K562 (cell line): ENCODE measurements at regions of chr15 and their contacts with region 1.

Region 1: DNA sequence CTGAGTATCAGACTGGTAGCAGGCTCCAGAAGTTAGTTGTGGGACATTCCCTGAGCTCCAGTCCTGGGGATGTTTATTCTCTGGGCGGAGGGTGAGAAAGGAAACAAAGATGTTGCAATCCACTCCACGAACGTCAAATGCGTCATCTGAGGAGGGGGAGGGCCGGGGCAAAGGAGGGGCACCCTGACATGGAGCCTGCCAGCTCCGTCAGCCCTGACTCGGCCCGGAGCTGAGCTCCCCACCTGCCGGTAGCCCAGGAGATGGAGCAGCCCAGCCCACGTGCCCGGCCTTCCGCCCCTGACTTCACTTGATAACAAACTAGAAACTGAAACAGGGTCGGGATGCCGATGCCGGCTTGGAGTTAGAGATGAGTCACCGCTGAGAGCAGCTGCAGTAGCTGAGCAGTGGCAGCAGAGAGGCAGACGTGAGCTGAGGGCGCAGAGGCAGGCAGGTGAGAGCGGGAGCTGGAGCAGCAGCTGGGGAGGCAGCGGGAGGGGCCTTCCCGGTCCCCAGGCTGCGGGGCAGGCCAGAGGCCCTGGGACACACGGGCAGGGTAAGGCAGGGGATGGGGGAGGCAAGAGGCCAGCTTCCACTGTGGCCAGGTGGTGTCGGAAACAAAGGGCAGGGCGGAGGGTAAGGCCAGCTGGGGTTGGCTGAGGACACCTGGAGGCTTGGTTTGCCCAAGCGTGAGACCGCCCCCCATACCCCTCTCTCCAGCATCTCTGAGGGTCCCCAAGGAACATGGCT is at the start of gene ISG20:
- DNase-seq: peak; percentile 91 to 95 (median 93)
- ATAC-seq: peak; percentile 96
- H3K4me3 ChIP-seq: peak within 1 kb of the TSS; percentile 14
- H3K27ac ChIP-seq: peak within 1 kb of the TSS; percentile 76
- H3K4me1 ChIP-seq: peaks cover 16 to 17% of the 10 kb centered on the region in 2 experiments; a peak in 4 of 5 replicates
- H3K27me3 ChIP-seq: no peaks in the 10 kb centered on the region
- CTCF ChIP-seq: peak; percentile 64 to 76 (median 65)
- EP300 ChIP-seq: peak; percentile 83
- POLR2A ChIP-seq: peak; percentile 55; the same call in 1 of the 2 replicates
- RAD21 ChIP-seq: peak in 1 of 2 experiments; percentile 36; a peak in 2 of 4 replicates
- polyA plus RNA-seq, gene ISG20: 0.70 to 1.00 TPM

Region 2: DNA sequence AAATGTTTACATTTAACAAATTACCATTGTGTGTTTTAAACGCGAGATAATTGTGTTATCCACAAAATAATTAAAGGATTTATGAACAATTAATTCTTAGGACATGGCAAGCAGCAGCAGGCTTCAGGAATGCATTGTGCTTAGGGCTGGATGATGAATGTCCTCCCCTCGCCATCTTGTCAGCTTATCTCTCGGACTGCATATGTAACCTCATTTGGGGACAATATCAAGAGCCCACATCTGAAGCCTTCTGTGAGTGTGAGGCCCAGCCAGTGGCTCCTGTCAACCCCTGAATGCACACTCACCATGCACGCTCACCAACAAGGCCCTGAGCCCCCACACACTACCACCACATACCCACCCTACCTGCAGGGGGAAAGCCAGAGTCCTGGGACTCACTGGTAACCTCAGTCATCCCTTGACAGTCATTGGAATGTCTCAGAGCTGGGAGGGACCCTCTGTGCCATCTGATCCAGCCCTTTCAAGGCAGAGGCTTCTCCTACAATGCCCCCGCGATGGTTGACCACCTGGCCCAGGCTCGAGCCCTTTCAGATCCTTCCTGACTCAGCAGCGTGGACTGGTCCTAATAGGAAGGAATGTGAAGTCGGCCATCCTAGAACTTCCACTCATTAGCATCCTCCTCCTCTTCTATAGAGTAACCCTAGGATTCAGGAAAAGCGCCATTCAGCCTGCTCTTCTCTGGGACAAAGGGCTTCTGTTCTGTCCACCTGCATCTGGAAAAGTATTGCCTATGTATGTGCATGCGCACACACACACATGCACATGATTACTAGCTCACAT is 209.8 kb before region 1 on chr15:
- CTCF ChIA-PET with region 1: no interaction called
- POLR2A ChIA-PET with region 1: no interaction called
- in situ Hi-C with region 1: no loop called
- intact Hi-C with region 1: no loop called
- DNase-seq: peak in 1 of 4 experiments; percentile 10
- ATAC-seq: peak; percentile 61
- H3K4me3 ChIP-seq: no peak overlapping the region
- H3K27ac ChIP-seq: no peak overlapping the region
- H3K4me1 ChIP-seq: 0 out of 5 replicates have a peak, but pooled peaks cover 0 to 4% of the 10 kb centered on the region in 2 experiments
- H3K27me3 ChIP-seq: peaks cover 21 to 33% of the 10 kb centered on the region in 2 experiments
- CTCF ChIP-seq: no peak
- EP300 ChIP-seq: no peak
- POLR2A ChIP-seq: no peak
- RAD21 ChIP-seq: no peak

Region 3: GRCh38 chr15:88628018-88628892 is 10.5 kb before region 1 on chr15:
- CTCF ChIA-PET with region 1: no interaction called
- POLR2A ChIA-PET with region 1: interaction called, 10 read pairs
- in situ Hi-C with region 1: no loop called
- intact Hi-C with region 1: no loop called
- DNase-seq: peak in 1 of 4 experiments; percentile 38
- ATAC-seq: no peak
- H3K4me3 ChIP-seq: no peak overlapping the region
- H3K27ac ChIP-seq: no peak overlapping the region
- H3K4me1 ChIP-seq: peaks cover 2 to 31% of the 10 kb centered on the region in 2 experiments; a peak in 4 of 5 replicates
- H3K27me3 ChIP-seq: no peaks in the 10 kb centered on the region
- CTCF ChIP-seq: no peak
- EP300 ChIP-seq: no peak
- POLR2A ChIP-seq: peak; percentile 17; the same call in 1 of the 2 replicates
- RAD21 ChIP-seq: no peak

Region 4: DNA sequence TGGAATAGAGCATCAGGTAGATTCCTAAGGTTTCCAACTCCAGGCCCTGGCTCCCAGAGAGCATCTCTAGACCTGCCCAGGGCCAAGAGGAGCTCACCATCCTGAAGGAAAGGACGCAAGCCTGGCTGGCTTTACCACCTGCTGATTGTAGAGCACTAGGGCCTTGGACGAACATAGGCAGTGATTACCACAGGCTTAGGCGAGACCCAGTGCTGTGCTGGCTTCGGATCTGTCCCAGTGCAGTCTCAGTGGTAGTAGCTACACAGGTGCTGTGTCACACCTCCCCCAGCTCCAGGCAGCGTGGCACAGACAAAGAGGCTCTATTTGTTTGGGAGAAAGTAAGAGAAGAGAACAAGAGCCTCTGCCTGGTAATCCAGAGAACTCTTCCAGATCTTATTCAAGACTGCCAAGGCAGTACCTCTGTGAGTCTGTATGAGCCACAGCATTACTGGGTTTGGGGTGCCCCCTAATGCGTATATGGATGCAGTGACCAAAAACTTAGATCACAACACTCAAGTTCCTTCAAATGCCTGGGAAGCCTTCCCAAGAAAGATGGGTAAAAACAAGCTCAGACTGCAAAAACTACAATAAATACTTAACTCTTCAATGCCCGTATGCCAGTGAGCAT is 25.5 kb after region 1 on chr15:
- CTCF ChIA-PET with region 1: no interaction called
- POLR2A ChIA-PET with region 1: no interaction called
- in situ Hi-C with region 1: no loop called
- intact Hi-C with region 1: loop called (anchors 1 kb)
- DNase-seq: no peak
- ATAC-seq: peak; percentile 51; the same call in 1 of the 3 replicates
- H3K4me3 ChIP-seq: no peak overlapping the region
- H3K27ac ChIP-seq: no peak overlapping the region
- H3K4me1 ChIP-seq: no peaks in the 10 kb centered on the region
- H3K27me3 ChIP-seq: peaks cover 4 to 21% of the 10 kb centered on the region in 2 experiments; a peak in 4 of 5 replicates
- CTCF ChIP-seq: peak in 2 of 3 experiments; percentile 22 to 34; a peak in 1 of 6 replicates
- EP300 ChIP-seq: no peak
- POLR2A ChIP-seq: no peak
- RAD21 ChIP-seq: peak in 1 of 2 experiments; percentile 51; a peak in 2 of 4 replicates

Region 5: GRCh38 chr15:88865498-88866099 is 226.8 kb after region 1 on chr15:
- CTCF ChIA-PET with region 1: no interaction called
- POLR2A ChIA-PET with region 1: no interaction called
- in situ Hi-C with region 1: no loop called
- intact Hi-C with region 1: no loop called
- DNase-seq: peak; percentile 54 to 75 (median 62)
- ATAC-seq: peak; percentile 71
- H3K4me3 ChIP-seq: no peak overlapping the region
- H3K27ac ChIP-seq: peak overlapping the region; percentile 69
- H3K4me1 ChIP-seq: peaks cover 15 to 27% of the 10 kb centered on the region in 2 experiments; a peak in 4 of 5 replicates
- H3K27me3 ChIP-seq: peaks cover 4 to 18% of the 10 kb centered on the region in 2 experiments; a peak in 3 of 5 replicates
- CTCF ChIP-seq: no peak
- EP300 ChIP-seq: no peak; the same call in 1 of the 2 replicates
- POLR2A ChIP-seq: no peak
- RAD21 ChIP-seq: no peak